Posterior cingulate gyrus (tissue), 11 donors: ENCODE measurements at regions of chr4 and their contacts with region 1.

Region 1: DNA sequence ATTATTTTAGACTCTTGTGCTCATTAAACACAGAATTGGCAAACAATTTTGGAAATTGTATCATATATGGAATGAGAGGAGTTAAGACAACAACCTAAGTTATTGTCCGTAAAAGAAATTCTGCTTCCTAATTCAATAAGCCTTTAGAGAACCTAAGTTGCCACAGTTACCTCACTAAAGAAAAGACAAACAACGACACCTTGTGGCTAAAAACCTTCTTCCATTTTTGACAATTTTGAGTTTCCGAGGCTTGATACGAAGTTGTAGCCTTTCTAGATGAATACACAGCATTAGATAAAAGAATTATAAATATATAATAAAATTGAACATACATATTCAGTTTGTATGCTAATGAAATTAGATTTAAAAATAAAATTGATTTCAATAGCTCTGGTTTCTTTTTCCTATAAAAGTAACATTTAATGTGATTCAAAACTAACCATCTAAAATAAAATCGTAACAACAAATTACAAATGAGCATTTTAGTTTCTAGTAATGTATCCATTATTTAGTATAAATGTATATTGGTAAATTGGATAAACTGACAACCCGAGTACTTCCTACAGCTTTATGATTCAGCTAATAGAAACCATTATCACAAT is 275.1 kb downstream of the GPM6A start:
- DNase-seq: no peak

Region 2: GRCh38 chr4:174764105-174764729 is 772.7 kb before region 1 on chr4:
- intact Hi-C with region 1: loop called (anchors 2 kb)
- DNase-seq: no peak

Region 3: GRCh38 chr4:175691791-175692190 is 154.8 kb after region 1 on chr4:
- intact Hi-C with region 1: no loop called
- DNase-seq: no peak